GM12878 (cell line): ENCODE measurements at regions of chr1 and their contacts with region 1.

Region 1: DNA sequence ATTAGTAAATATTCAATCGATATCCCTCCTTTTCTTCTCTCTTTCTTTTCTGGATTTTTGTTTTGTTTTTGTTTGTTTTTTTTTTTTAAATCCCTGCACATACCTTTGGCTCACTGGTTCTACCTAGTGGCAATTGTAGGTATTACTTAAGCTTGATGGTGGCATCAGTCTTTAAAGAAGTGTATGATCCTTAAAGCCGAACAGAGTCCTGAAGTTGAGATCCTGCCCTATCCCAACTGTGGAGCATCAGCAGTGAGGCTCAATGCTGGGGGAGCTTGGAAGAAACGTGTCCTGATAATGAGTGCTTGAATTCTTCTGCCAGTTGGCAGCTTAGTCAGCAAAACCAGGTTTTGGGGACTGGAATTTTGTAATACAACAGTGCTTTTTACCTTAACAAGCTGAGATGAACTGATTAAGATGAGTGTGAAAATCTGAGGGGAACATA is 60.8 kb downstream of the FASLG start:
- DNase-seq: no peak
- ATAC-seq: peak; percentile 83
- H3K4me3 ChIP-seq: no peak overlapping the region
- H3K27ac ChIP-seq: no peak overlapping the region
- H3K4me1 ChIP-seq: no peaks in the 10 kb centered on the region
- H3K27me3 ChIP-seq: peaks cover 0 to 2% of the 10 kb centered on the region in 2 experiments; a peak in 1 of 4 replicates
- CTCF ChIP-seq: peak; percentile 64 to 78 (median 69)
- EP300 ChIP-seq: no peak
- POLR2A ChIP-seq: no peak
- RAD21 ChIP-seq: peak; percentile 88

Region 2: DNA sequence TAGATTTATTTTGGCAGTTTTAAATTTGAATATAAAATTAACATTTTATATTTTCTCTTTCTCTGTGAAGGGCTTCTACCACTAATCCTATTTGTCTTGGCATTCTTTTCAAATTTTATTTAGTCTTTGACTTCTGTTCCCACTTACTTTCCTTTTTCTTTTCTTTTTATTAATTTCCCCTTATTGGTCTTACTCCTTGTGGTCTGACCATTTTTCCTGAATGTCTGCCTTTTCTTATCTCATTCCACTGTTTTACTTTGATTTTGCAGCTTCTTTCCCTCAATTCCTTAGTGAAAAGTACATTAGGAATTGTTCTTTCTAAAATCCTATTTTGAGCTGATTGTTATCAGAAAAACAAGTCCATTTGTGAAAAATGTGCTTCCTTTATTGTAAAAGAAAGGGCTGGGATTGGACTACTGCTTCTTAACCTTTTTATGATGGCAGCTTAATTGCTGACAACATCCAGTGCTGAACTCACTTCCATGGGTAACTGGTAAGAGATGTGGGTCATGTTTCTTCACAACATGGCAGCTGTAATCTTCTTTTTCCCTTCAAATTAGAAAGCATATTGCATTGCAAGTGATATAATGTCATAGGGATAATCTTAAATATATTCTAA is 593.8 kb before region 1 on chr1:
- CTCF ChIA-PET with region 1: no interaction called
- POLR2A ChIA-PET with region 1: no interaction called
- RAD21 ChIA-PET with region 1: no interaction called
- SMC1A ChIA-PET with region 1: no interaction called
- in situ Hi-C with region 1: no loop called
- intact Hi-C with region 1: no loop called
- DNase-seq: no peak
- ATAC-seq: no peak
- H3K4me3 ChIP-seq: no peak overlapping the region
- H3K27ac ChIP-seq: no peak overlapping the region
- H3K4me1 ChIP-seq: no peaks in the 10 kb centered on the region
- H3K27me3 ChIP-seq: no peaks in the 10 kb centered on the region
- CTCF ChIP-seq: no peak
- EP300 ChIP-seq: no peak
- POLR2A ChIP-seq: no peak
- RAD21 ChIP-seq: no peak

Region 3: DNA sequence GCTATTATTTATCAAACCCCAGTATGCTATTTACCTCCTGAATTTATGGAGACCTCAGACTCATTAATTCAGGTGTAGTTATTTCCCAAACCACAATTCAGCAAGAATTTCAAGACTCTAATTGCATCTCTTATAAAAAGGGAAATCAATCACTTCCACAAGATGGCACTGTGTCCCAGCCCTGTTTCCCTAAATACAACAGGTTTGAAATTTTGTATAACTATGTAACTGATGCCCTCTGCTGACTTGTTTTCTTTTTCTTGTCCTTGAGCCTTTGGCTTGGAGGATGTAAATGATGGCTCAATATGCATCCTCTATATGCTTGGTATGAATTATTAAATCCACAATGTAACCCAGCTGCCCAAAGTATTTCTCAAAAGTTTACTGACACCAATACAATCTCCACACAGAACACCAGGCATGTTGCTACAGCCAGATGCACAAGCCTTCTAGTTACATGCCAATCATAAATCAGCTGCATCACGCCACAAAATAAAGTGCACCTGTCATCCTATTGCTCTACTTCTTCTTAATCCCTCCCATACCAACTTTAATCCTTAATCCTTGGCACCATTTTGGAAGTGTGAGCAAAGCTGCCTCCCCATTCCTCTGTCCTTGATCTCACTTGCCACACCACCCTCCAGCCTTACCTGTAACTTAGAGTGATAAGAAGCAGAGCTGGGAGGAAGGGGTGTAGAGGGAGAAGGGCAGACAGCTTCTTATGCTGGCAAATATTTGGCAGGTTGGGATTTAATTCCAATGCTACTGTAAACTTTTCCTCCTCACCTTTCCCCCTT is 290.2 kb before region 1 on chr1:
- CTCF ChIA-PET with region 1: interaction called, 3 read pairs
- POLR2A ChIA-PET with region 1: no interaction called
- RAD21 ChIA-PET with region 1: no interaction called
- SMC1A ChIA-PET with region 1: interaction called, 13 read pairs
- in situ Hi-C with region 1: no loop called
- intact Hi-C with region 1: no loop called
- DNase-seq: peak; percentile 34
- ATAC-seq: peak; percentile 85
- H3K4me3 ChIP-seq: no peak overlapping the region
- H3K27ac ChIP-seq: no peak overlapping the region
- H3K4me1 ChIP-seq: peaks cover 8% of the 10 kb centered on the region
- H3K27me3 ChIP-seq: no peaks in the 10 kb centered on the region
- CTCF ChIP-seq: peak; percentile 56 to 75 (median 65)
- EP300 ChIP-seq: no peak
- POLR2A ChIP-seq: no peak
- RAD21 ChIP-seq: peak; percentile 67

Region 4: GRCh38 chr1:172449585-172450534 is 269.9 kb before region 1 on chr1:
- CTCF ChIA-PET with region 1: interaction called, 48 read pairs
- POLR2A ChIA-PET with region 1: no interaction called
- RAD21 ChIA-PET with region 1: interaction called, 11 read pairs
- SMC1A ChIA-PET with region 1: interaction called, 19 read pairs
- in situ Hi-C with region 1: loop called (anchors 5 kb)
- intact Hi-C with region 1: loop called (anchors 1 kb)
- DNase-seq: no peak
- ATAC-seq: peak; percentile 96
- H3K4me3 ChIP-seq: no peak overlapping the region
- H3K27ac ChIP-seq: no peak overlapping the region
- H3K4me1 ChIP-seq: no peaks in the 10 kb centered on the region
- H3K27me3 ChIP-seq: no peaks in the 10 kb centered on the region; a peak in 1 of 4 replicates
- CTCF ChIP-seq: peak; percentile 83 to 88 (median 84)
- EP300 ChIP-seq: no peak
- POLR2A ChIP-seq: no peak
- RAD21 ChIP-seq: peak; percentile 72

Region 5: GRCh38 chr1:172609528-172609927 is 110.2 kb before region 1 on chr1:
- CTCF ChIA-PET with region 1: interaction called, 43 read pairs
- POLR2A ChIA-PET with region 1: no interaction called
- RAD21 ChIA-PET with region 1: interaction called, 14 read pairs
- SMC1A ChIA-PET with region 1: interaction called, 16 read pairs
- in situ Hi-C with region 1: no loop called
- intact Hi-C with region 1: loop called (anchors 1 kb)
- DNase-seq: no peak
- ATAC-seq: peak; percentile 68
- H3K4me3 ChIP-seq: no peak overlapping the region
- H3K27ac ChIP-seq: no peak overlapping the region
- H3K4me1 ChIP-seq: no peaks in the 10 kb centered on the region
- H3K27me3 ChIP-seq: no peaks in the 10 kb centered on the region
- CTCF ChIP-seq: peak in 2 of 3 experiments; percentile 6 to 22; a peak in 2 of 6 replicates
- EP300 ChIP-seq: no peak
- POLR2A ChIP-seq: no peak
- RAD21 ChIP-seq: peak; percentile 43

Region 6: GRCh38 chr1:172616195-172616970 is 103.3 kb before region 1 on chr1:
- CTCF ChIA-PET with region 1: interaction called, 43 read pairs
- POLR2A ChIA-PET with region 1: no interaction called
- RAD21 ChIA-PET with region 1: interaction called, 8 read pairs
- SMC1A ChIA-PET with region 1: interaction called, 4 read pairs
- in situ Hi-C with region 1: loop called (anchors 5 kb)
- intact Hi-C with region 1: no loop called
- DNase-seq: no peak
- ATAC-seq: no peak
- H3K4me3 ChIP-seq: no peak overlapping the region
- H3K27ac ChIP-seq: no peak overlapping the region
- H3K4me1 ChIP-seq: no peaks in the 10 kb centered on the region
- H3K27me3 ChIP-seq: no peaks in the 10 kb centered on the region; a peak in 2 of 4 replicates
- CTCF ChIP-seq: no peak
- EP300 ChIP-seq: no peak
- POLR2A ChIP-seq: no peak
- RAD21 ChIP-seq: no peak

Region 7: DNA sequence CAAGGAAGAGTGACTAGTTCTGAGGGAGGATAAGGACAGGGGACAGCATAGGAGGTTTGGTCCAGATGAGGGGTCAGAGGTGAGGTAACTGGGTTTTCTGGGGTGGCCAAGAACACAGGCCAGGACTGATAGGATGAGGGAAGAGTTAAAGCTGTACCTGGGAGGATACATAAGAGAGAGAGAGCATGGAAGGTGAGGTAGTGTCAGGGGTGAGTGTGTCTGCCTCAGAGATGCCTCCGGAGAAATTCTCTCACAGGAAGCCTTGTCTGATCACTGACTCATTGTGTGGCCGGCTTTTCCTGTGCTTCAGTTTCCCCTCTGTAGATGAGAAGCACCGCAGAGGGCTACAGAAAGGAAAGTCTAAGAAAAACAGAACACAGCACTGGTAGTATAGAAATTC is 20.6 kb before region 1 on chr1:
- CTCF ChIA-PET with region 1: interaction called, 3 read pairs
- POLR2A ChIA-PET with region 1: no interaction called
- RAD21 ChIA-PET with region 1: no interaction called
- SMC1A ChIA-PET with region 1: interaction called, 4 read pairs
- in situ Hi-C with region 1: no loop called
- intact Hi-C with region 1: loop called (anchors 2 kb)
- DNase-seq: peak; percentile 17
- ATAC-seq: peak; percentile 78
- H3K4me3 ChIP-seq: no peak overlapping the region
- H3K27ac ChIP-seq: no peak overlapping the region
- H3K4me1 ChIP-seq: peaks cover 12% of the 10 kb centered on the region
- H3K27me3 ChIP-seq: no peaks in the 10 kb centered on the region
- CTCF ChIP-seq: no peak
- EP300 ChIP-seq: no peak
- POLR2A ChIP-seq: no peak
- RAD21 ChIP-seq: no peak